HEK293 (cell line): ENCODE measurements at regions of chr1 and their contacts with region 1.

Region 1: GRCh38 chr1:157380523-157380922 is 171.8 kb downstream of the FCRL5 start:
- H3K4me3 ChIP-seq: no peak overlapping the region
- H3K27ac ChIP-seq: no peak overlapping the region
- H3K4me1 ChIP-seq: no peaks in the 10 kb centered on the region; the same call in 1 of the 2 replicates
- CTCF ChIP-seq: no peak

Region 2: DNA sequence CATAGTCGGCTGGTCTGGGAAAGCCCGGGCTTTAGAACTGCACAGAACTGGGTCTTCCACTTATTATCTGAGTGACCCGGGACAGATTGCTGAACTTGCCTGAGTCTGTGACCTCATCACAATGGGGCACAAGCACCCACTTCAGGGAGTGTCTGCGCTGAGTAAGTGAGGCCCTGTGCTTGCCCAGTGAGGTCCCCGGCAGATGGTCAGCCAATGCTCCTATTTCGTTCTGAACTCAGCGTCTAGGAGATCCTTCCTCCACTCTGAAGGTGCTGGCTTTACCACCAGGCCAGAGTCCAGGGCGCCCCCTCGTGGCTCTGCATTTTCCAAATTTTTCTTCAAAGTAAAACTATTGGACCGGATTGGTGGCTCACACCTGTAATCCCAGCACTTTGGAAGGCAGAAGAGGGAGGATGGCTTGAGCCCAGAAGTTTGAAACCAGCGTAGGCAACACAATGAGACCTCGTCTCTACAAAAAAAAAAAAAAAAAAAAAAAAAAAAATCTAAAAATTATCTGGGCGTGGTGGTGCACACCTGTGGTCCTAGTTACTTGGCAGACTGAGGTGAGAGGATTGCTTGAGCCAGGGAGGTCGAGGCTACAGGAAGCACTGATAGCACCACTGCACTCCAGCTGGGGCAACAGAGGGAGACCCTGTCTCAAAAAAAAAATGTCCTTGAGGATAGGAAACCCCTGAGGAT is 110.1 kb after region 1 on chr1:
- CTCF ChIA-PET with region 1: interaction called, 12 read pairs
- POLR2A ChIA-PET with region 1: no interaction called
- H3K4me3 ChIP-seq: no peak overlapping the region
- H3K27ac ChIP-seq: no peak overlapping the region
- H3K4me1 ChIP-seq: no peaks in the 10 kb centered on the region
- CTCF ChIP-seq: peak; percentile 42